BJ (cell line): ENCODE measurements at regions of chr17 and their contacts with region 1.

Region 1: DNA sequence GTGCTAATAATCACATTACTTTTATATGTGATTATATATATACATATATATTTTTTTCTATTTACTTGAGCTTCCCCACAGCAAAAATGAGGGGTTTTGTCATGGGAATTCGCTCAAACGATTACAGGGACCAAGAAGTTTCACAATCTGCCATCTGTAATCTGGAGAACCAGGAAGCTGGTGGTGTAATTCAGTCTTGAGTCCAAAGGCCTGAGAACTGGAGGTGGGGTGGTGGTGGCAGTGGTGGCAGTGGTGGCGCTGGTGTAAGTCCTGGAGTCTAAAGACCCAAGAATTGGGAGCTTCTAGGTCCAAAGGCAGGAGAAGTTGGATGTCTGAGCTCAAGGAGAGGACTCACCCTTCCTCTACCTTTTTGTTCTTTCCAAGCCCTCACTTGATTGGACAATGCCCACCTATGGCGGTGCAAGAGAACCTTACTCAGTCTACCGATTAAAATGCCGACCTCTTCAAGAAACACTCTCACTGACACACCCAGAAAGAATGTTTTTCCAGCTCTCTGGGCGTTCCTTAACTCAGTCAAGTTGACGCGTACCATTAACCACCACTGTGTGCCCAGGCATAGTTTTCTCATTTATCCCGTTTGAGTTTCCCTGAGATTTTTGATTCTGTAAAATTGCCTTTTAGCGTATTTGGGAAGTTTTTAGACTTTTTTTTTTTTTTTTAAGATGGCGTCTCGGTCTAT is 31.9 kb downstream of the POLR2A start:
- DNase-seq: no peak
- H3K4me3 ChIP-seq: no peak overlapping the region
- H3K27me3 ChIP-seq: no peaks in the 10 kb centered on the region
- CTCF ChIP-seq: no peak

Region 2: DNA sequence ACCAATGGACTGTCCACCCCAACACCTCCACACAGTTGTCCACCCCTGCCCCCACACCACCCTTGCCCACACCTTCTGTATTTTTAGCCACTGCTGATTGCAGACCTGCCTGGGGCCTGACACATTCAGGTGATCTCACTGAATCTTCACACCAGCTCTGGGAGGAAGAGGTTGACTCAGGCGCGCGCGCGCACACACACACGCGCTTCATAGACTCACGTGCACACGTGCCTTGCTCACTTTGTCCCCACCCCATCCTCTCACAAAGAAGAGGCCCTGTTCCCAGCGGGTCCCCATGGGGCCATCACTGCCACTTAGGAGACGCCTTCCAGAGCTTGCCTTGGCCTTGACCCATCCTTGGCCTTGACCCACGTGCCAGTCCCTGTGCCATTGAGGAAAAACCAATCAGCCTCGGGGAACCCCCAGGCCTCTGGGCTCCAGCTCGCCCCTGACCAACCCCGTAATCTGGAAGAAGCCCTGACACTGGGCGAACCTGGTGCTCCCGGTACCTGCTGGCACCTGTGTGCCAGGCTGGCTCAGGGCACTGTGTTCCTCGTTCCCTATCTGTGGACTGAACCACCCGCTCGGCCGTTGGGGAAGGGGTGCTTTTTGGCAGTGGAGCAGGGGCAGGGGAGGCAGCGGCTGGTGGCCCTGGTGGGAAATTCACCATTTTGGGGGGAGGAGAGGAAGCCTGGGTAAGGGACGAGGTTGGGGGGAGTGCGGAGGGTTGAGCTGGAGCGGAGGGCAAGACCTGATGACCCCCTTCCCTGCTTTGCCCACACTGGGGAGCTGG is 105.2 kb before region 1 on chr17:
- CTCF ChIA-PET with region 1: no interaction called
- POLR2A ChIA-PET with region 1: no interaction called
- DNase-seq: no peak
- H3K4me3 ChIP-seq: no peak overlapping the region
- H3K27me3 ChIP-seq: no peaks in the 10 kb centered on the region
- CTCF ChIP-seq: no peak

Region 3: GRCh38 chr17:7484067-7484918 is 31.8 kb before region 1 on chr17 and contains the start of gene POLR2A:
- CTCF ChIA-PET with region 1: interaction called, 24 read pairs
- POLR2A ChIA-PET with region 1: no interaction called
- DNase-seq: peak; percentile 92
- H3K4me3 ChIP-seq: peak within 1 kb of the TSS; percentile 67
- H3K27me3 ChIP-seq: no peaks in the 10 kb centered on the region
- CTCF ChIP-seq: no peak
- polyA plus RNA-seq, gene POLR2A: 21.5 and 27.7 TPM in 2 replicates

Region 4: GRCh38 chr17:7496470-7497183 is 19.4 kb before region 1 on chr17:
- CTCF ChIA-PET with region 1: interaction called, 19 read pairs
- POLR2A ChIA-PET with region 1: no interaction called
- DNase-seq: no peak
- H3K4me3 ChIP-seq: no peak overlapping the region
- H3K27me3 ChIP-seq: no peaks in the 10 kb centered on the region
- CTCF ChIP-seq: no peak

Region 5: GRCh38 chr17:7502987-7503386 is 13.1 kb before region 1 on chr17:
- CTCF ChIA-PET with region 1: interaction called, 19 read pairs
- POLR2A ChIA-PET with region 1: no interaction called
- DNase-seq: no peak
- H3K4me3 ChIP-seq: no peak overlapping the region
- H3K27me3 ChIP-seq: no peaks in the 10 kb centered on the region
- CTCF ChIP-seq: 0 out of 2 replicates have a peak, but pooled peaks have one; percentile 14

Region 6: GRCh38 chr17:7729816-7730215 is 213.8 kb after region 1 on chr17:
- CTCF ChIA-PET with region 1: no interaction called
- POLR2A ChIA-PET with region 1: no interaction called
- DNase-seq: no peak
- H3K4me3 ChIP-seq: no peak overlapping the region
- H3K27me3 ChIP-seq: peaks cover 7% of the 10 kb centered on the region
- CTCF ChIP-seq: no peak